Activated CD4-positive, alpha-beta T cell treated with anti-CD3 and anti-CD28 coated beads for 36 hours (primary cell): ENCODE measurements at regions of chr2 and their contacts with region 1.

Region 1: DNA sequence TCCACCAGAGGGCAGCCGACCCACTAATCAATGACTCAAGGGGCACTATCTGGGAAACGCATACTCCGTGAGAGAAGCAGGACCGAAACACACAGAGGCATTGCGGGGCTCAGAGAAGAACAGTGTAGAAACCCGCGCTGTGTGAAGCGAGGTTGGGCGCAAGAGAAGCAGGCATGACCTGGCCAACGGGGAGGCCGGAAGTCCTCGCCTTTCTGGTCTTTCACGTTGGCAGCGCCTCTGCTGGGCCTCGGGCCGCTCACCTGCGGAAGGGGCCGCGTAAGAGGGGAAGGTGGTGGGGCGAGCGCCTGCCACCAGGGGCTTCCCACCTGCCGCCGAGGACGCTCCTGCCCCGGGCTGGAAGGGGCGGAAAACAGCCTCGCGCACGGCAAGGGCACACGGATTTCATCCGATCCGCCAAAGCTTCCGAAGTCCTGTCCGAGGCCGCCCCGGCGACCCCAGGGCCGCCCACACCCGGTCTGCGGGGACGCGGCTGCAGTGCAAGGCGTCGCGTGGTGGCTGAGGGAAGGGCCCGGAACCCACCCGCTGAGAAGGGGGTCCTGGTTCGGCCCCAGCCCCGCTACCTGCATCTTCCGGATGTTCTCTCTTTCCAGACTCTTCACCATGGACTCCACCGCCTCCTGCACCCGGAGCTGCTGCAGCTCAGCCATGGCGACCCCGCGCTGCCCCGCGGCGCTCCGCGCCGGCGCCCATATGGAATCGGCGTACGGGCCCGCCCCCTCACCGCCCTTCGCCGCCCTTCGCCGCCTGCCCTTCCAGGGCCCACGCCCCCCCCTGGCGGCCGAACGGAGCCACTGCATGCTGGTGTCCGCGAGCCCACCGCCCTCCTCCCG is at the start of gene FAM136A:
- DNase-seq: peak; percentile 93
- ATAC-seq: peak; percentile 79
- H3K4me3 Mint-ChIP-seq: peak within 1 kb of the TSS; percentile 91
- H3K27ac Mint-ChIP-seq: peak within 1 kb of the TSS; percentile 94
- H3K4me1 Mint-ChIP-seq: peaks cover 35% of the 10 kb centered on the region
- H3K27me3 Mint-ChIP-seq: no peaks in the 10 kb centered on the region
- total RNA-seq, gene FAM136A: 45.0 to 52.8 TPM

Region 2: DNA sequence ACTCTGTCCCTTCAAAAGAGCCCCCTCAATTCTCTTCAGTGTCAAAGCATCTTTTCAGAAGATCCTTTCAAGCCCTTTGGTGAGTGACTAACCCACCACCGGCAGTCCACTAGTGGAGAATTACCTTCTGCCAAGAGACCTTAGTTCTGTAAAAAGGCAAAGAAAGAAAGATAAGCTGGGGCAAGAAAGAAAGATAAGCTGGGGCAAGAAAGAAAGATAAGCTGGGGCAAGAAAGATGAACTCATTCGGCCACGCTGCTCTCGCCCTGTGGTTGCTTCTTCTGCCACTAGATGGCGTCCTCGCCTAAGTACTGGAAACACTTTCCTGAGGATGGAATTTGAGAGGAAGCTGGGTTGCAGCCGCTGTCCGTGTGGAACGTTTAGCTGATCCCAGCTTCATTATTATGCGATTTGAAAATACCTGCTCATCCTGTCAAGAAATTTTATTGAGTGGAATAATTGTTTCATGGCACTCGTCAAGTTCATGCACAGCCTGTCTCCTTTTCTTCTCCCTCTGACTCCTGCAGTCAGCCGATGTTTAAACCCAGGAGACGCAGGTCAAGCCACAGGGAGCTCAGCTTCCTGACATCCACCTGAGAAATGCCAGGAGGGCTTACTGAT is 576.9 kb before region 1 on chr2:
- CTCF ChIA-PET with region 1: interaction called, 4 read pairs
- POLR2A ChIA-PET with region 1: no interaction called
- intact Hi-C with region 1: loop called in 1 of 2 experiments (anchors 1 kb)
- DNase-seq: peak; percentile 92
- ATAC-seq: peak; percentile 92
- H3K4me3 Mint-ChIP-seq: peak overlapping the region; percentile 47
- H3K27ac Mint-ChIP-seq: peak overlapping the region; percentile 20
- H3K4me1 Mint-ChIP-seq: peaks cover 4% of the 10 kb centered on the region
- H3K27me3 Mint-ChIP-seq: no peaks in the 10 kb centered on the region

Region 3: GRCh38 chr2:70050631-70051030 is 250.9 kb before region 1 on chr2:
- CTCF ChIA-PET with region 1: no interaction called
- POLR2A ChIA-PET with region 1: no interaction called
- intact Hi-C with region 1: no loop called
- DNase-seq: no peak
- ATAC-seq: no peak
- H3K4me3 Mint-ChIP-seq: no peak overlapping the region
- H3K27ac Mint-ChIP-seq: no peak overlapping the region
- H3K4me1 Mint-ChIP-seq: peaks cover 4% of the 10 kb centered on the region
- H3K27me3 Mint-ChIP-seq: no peaks in the 10 kb centered on the region

Region 4: DNA sequence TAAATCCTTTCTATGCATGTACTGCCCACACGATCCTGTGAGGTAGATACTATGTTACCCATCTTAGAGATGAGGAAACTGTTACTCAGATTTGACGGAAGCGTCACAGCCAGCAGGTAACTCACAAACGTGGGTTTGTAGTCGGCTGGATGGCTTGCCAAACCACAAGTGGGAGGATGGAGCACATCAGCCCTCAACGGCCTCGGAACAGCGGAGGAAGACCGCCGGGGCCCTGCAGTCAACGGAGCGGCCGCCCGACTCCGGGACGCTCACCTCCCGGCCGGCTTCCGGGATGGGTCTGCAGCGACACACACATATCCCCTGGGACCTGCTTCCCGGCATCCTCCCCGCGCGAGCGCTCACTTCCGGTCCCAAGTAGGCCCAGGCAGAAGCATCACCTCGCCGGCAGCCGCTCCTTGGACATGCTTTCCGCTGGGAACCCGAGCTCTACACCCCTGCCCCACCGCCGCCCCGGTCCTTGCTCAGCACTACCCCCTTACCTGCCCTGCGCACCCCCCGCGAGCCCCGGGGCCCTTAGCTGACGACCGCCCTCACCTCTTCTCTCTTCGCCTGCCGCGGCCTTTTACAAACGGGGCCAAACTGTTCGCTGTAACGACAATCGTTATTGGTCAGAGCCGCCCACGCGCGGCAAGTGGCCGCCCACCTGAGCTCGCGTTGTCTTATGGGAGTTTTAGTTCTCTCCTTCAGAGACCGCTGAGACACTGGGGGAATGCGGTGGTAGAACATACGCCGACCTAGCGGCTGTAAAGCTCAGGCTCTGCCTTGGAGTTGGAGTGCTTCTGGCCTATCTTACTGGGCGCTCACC is 110.9 kb before region 1 on chr2 and contains the start of gene C2orf42:
- CTCF ChIA-PET with region 1: no interaction called
- POLR2A ChIA-PET with region 1: no interaction called
- intact Hi-C with region 1: loop called (anchors 1 to 2 kb)
- DNase-seq: peak; percentile 98
- ATAC-seq: peak; percentile 91
- H3K4me3 Mint-ChIP-seq: peak within 1 kb of the TSS; percentile 84
- H3K27ac Mint-ChIP-seq: peak within 1 kb of the TSS; percentile 97
- H3K4me1 Mint-ChIP-seq: peaks cover 16% of the 10 kb centered on the region
- H3K27me3 Mint-ChIP-seq: no peaks in the 10 kb centered on the region
- total RNA-seq, gene C2orf42: 22.6 to 23.3 TPM

Region 5: DNA sequence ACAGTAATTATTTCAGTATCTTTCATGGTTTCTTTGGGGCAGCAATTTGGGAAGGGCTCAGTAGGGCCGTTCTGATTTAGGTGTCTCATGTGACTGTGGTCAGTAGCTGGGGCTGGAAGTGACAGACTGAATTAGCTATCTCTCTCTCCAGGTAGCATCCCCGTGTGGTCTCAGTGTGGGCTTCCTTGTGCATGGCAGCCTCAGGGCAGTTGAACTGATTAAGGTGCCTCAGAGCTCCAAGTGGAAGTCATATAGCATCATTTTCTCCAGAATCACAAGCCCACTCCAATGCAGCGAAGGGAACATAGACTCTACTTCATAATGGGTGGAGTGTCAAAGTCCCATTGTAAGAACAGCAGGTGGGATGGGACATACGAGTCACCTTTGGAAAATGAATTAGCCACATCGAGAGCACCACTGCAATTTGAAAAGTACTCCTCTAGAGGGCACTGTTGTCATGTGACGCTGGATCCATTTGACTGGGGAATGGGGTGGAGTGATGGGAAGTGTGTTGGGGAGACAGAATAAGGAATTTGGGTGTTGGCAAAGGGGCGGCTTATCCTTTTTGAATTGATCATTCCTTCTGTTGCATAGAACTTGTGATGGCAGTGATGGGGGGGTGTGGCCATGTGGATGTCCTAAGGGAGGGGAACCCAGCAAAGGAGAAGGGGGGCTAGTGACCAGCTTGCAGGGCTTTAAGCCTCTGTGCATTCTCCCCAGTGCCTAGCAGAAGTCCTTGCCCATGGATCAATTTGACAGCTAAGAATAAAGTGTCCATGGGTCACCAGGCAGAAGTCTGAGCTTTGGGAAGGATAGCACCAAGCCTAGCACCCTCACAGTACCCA is 39.6 kb after region 1 on chr2:
- CTCF ChIA-PET with region 1: interaction called, 6 read pairs
- POLR2A ChIA-PET with region 1: no interaction called
- intact Hi-C with region 1: loop called in 1 of 2 experiments (anchors 1 kb)
- DNase-seq: peak; percentile 49
- ATAC-seq: peak; percentile 66
- H3K4me3 Mint-ChIP-seq: no peak overlapping the region
- H3K27ac Mint-ChIP-seq: no peak overlapping the region
- H3K4me1 Mint-ChIP-seq: peaks cover 2% of the 10 kb centered on the region
- H3K27me3 Mint-ChIP-seq: no peaks in the 10 kb centered on the region

Region 6: DNA sequence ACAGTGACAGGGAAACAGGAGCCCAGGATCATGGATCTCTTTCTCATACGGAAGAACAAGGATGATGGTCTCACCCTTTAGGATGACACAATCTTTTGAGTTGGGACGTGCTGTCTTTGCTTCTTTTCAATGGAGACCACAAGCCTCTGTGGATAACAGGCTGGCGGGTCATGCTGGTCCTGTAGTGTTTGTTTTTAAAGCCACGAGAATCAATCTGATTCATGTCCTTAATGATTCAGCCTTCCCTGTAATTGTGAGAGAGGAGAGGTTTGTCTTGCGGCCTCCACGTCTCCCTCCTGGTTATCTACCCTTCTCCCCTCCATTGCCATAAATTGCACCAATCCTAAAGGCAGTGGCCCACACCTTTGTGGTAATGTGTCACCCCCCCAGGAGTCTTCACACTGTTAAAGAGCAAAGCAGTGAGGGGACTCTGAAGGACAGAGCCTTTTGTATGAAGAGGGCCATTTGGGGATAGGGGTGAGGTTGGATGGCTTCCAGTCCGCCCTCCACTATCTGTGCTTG is 339.8 kb after region 1 on chr2:
- CTCF ChIA-PET with region 1: interaction called, 80 read pairs
- POLR2A ChIA-PET with region 1: no interaction called
- intact Hi-C with region 1: loop called in 1 of 2 experiments (anchors 1 kb)
- DNase-seq: no peak
- ATAC-seq: peak; percentile 73
- H3K4me3 Mint-ChIP-seq: no peak overlapping the region
- H3K27ac Mint-ChIP-seq: no peak overlapping the region
- H3K4me1 Mint-ChIP-seq: peaks cover 31% of the 10 kb centered on the region
- H3K27me3 Mint-ChIP-seq: no peaks in the 10 kb centered on the region

Region 7: DNA sequence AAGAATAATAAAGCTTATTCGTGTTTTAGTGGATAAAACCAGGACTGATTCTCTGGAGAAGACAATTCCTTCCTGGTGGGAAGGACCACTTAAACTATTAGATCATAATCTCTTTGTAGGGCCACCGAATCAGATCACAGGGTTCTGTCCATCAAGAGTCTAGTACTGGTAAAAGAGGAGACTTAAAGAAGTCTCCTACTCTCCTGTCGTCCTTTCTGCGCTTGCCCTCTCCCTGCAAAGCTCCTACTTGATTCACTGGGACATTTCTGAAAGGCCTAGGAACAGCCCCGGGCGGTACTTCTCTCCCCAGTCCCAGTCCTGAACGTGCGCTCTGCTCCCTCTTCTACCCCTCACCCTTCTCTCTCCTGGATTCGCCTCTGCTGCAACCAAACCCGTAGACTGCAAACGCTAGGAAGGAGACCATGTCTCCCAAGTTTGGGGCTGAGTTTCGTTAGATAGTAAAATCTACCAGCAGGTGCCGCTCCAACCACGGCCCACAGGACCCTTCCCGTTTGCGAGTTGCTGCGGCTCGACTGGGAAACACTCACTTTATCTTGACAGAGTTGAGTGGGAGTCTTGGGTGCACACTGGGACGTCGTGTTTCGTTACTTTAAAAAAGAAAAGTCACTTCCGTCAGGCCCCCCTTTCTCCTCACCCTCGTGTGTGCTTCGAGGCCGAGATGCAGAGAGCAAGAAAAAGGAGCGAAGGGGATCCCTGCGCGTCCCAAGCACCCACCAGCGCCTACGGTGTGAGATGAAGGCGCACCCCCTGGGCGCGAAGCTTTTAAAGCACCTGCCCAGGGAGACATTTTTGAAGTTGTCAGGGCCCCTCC is 488.0 kb after region 1 on chr2:
- CTCF ChIA-PET with region 1: interaction called, 5 read pairs
- POLR2A ChIA-PET with region 1: no interaction called
- intact Hi-C with region 1: loop called in 1 of 2 experiments (anchors 1 kb)
- DNase-seq: peak; percentile 88
- ATAC-seq: peak; percentile 84
- H3K4me3 Mint-ChIP-seq: peak overlapping the region; percentile 56
- H3K27ac Mint-ChIP-seq: peak overlapping the region; percentile 27
- H3K4me1 Mint-ChIP-seq: peaks cover 11% of the 10 kb centered on the region
- H3K27me3 Mint-ChIP-seq: peaks cover 50% of the 10 kb centered on the region

Region 8: DNA sequence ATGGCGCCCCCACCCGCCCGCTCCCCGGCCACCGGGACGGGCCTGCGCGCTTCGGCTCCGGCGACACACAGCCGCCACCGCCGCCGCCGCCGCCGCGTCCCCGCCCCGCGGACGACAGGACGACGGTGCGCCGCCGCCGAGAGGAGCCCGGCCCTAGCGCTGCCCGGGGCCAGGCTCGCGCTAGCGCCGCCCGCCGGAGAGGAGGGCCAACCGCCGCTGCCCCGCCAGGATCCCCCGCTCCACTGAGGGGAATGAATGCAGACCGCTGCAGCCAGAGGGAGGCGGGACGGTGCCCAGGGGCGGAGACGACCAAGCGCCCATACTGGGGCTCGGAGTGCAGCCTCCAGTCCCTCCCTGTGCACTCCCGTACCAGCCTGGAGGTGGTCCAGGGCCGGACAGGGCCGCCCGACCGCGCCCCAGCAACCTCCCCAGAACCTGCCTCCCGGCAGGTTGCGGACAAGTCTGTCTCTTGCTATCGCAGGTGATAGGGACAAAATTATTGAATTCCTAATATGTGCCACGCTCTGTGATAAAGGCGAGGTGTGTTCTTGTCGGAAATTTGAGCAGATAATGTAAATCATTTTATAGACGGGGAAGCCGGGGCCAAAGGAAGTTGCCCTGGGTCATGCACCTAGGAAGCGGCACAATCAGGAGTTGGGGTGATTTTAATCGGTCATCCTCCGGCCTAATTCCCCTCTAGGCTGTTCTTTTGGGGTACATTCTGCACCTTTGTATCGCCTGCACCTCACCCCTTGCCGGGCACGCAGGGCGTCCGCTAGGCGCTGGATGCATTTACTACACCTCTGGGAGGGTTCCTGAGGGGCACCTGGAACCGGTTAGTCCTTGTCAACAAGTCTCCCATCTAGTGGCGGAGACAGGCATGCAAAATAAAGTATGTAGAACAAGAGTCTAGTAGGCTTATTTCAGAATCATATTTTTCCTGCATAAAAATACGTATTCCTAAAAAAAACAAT is 693.5 kb after region 1 on chr2 and contains the start of gene TEX261:
- CTCF ChIA-PET with region 1: no interaction called
- POLR2A ChIA-PET with region 1: no interaction called
- intact Hi-C with region 1: loop called in 1 of 2 experiments (anchors 1 kb)
- DNase-seq: peak; percentile 94
- ATAC-seq: peak; percentile 97
- H3K4me3 Mint-ChIP-seq: peak within 1 kb of the TSS; percentile 98
- H3K27ac Mint-ChIP-seq: peak within 1 kb of the TSS; percentile 93
- H3K4me1 Mint-ChIP-seq: peaks cover 29% of the 10 kb centered on the region
- H3K27me3 Mint-ChIP-seq: no peaks in the 10 kb centered on the region
- total RNA-seq, gene TEX261: 39.1 to 48.5 TPM